OCI-LY7 (cell line): ENCODE measurements at regions of chr7 and their contacts with region 1.

Region 1: GRCh38 chr7:136122011-136122410 is 144.9 kb upstream of the MTPN start:
- DNase-seq: no peak
- H3K4me3 ChIP-seq: no peak overlapping the region
- H3K27ac ChIP-seq: no peak overlapping the region
- H3K4me1 ChIP-seq: peaks cover 4% of the 10 kb centered on the region
- CTCF ChIP-seq: no peak

Region 2: GRCh38 chr7:136293272-136293671 is 171.3 kb after region 1 on chr7:
- CTCF ChIA-PET with region 1: no interaction called
- POLR2A ChIA-PET with region 1: no interaction called
- intact Hi-C with region 1: no loop called
- DNase-seq: peak; percentile 85
- H3K4me3 ChIP-seq: peak overlapping the region; percentile 51
- H3K27ac ChIP-seq: peak overlapping the region; percentile 89
- H3K4me1 ChIP-seq: peaks cover 53% of the 10 kb centered on the region
- CTCF ChIP-seq: no peak

Region 3: GRCh38 chr7:136312592-136312991 is 190.6 kb after region 1 on chr7:
- CTCF ChIA-PET with region 1: no interaction called
- POLR2A ChIA-PET with region 1: no interaction called
- intact Hi-C with region 1: no loop called
- DNase-seq: no peak
- H3K4me3 ChIP-seq: no peak overlapping the region
- H3K27ac ChIP-seq: peak overlapping the region; percentile 25
- H3K4me1 ChIP-seq: peaks cover 38% of the 10 kb centered on the region
- CTCF ChIP-seq: no peak

Region 4: GRCh38 chr7:136399385-136399784 is 277.4 kb after region 1 on chr7:
- CTCF ChIA-PET with region 1: no interaction called
- POLR2A ChIA-PET with region 1: no interaction called
- intact Hi-C with region 1: loop called (anchors 10 kb)
- DNase-seq: no peak
- H3K4me3 ChIP-seq: no peak overlapping the region
- H3K27ac ChIP-seq: no peak overlapping the region
- H3K4me1 ChIP-seq: no peaks in the 10 kb centered on the region
- CTCF ChIP-seq: no peak